Right cardiac atrium (tissue), 5 donors: ENCODE measurements at regions of chr2 and their contacts with region 1.

Region 1: DNA sequence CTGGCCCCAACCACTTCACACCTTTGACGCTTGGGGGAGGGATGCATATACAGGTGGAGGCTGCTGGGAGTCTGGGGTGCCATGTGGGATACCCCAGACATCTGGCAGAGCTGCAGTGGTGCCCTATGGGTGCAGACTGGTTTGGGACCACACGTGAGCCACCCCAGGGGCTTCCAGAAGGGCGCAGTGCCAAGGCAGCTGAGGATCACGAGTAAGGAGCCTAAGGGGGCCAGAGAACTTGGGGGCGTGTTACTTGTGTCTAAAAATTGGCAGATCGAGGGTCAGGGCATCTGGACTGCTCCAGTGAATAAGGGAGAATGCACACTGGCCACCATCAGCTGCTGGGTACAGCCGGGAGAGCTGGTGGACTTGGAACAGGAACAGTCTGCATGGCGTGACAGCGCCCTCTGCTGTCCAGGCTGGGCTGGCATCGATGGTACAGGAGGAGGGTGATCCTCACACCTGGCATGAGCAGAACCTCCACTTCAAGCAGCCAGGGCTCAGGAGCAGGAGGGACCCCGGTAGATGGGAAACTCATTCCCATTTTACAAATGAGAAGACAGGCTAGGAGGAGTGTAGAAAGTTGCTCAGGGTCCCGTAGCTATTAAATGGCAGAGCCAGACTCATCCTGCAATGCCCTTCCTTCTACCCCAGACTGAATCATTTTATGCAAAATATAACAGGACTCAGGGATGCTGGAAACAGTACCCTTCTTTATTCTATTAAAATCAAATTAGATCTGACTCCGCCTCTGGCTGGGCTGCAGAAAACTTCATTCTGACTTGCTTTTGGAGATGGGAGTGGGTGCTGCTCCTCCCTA is 60.4 kb downstream of the ATOH8 start:
- DNase-seq: peak; percentile 89 to 97 (median 96)
- ATAC-seq: peak; percentile 91
- H3K4me3 ChIP-seq: no peak overlapping the region
- H3K27ac ChIP-seq: no peak overlapping the region
- H3K4me1 ChIP-seq: peaks cover 3% of the 10 kb centered on the region
- H3K27me3 ChIP-seq: no peaks in the 10 kb centered on the region

Region 2: DNA sequence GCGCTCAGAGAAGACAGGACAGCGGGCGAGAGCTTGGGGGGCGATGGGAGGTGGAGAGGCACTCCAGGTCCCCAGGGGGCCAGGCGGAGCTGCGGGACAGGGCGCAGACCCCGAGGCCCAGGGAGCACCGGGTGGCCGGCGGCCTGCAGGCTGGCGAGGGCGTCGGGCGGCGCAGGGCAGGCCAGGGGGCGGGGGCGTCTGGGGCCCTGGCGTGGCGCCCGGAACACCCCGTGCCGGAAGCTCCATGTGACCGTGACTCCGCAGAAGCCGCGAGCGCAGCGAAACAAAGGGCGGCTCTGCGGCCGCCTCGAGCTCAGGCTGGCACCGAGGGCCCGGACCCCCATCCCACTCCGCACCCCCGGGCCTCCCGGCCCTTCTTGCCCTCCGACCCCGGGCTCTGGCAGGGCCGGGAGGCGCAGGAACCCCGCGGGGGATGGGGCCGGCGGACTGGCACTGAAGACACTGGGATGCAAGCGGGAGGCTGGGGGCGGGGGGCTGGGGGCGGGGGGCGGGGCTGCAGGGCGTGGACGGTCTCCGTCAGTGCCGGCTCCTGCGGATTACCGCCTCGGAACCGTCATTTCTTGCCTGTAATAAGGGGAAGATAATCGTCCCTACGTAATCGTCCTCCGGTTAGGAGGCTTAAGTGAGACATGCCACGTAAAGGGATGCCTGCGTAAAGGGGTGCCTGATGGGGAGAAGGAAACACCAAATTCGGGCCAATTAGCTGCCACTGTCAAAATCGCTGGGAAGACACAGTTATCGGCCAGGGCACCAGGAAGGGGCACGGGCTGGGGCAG is 376.5 kb before region 1 on chr2:
- intact Hi-C with region 1: no loop called
- DNase-seq: peak; percentile 91 to 97 (median 96)
- ATAC-seq: peak; percentile 88 to 89
- H3K4me3 ChIP-seq: peak overlapping the region; percentile 66
- H3K27ac ChIP-seq: peak overlapping the region; percentile 99
- H3K4me1 ChIP-seq: peaks cover 15% of the 10 kb centered on the region
- H3K27me3 ChIP-seq: no peaks in the 10 kb centered on the region

Region 3: DNA sequence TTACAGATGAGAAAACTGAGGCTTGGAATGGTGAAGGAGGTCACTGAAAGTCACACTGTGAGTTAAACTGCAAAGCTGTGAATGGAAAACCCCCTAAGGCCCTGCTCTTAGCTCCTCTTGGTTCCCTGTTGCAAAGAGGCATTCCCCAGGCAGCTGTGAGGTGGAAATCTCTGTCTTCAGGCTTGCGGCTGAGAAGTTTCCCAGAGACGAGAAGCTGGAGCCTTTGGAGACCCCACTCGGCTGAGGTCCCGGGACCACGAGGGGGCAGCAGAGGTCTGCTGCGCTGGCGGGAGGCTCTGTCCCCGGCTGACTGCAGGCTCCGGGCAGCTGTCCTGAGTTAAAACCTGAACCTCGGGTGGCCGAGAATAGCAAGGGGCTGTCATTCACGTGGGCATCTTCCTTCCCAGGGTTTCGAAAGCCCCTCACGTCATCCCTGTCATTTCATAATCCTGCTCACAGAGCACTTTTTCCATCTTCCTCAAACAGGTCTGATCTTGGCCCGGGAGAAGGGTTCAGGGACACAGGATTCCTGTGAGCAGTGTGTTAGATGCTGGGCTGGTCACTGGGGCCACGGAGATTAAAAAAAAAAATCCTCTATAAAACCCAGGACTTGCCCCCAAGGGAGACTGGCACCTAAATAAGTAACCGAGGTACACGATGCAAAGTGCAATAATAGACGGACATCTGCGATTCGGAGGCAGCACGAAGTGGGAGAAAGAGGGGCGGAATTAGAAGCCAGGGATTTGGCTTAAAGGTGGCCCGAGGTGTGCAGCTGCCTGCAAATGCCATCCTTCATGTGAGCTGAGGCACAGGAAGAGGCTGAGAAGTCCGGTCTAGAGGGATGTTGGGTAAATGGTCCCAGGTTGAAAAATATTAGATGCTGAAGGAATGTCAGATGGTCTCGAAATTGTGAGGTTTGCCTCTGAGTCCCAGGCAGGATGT is 85.0 kb before region 1 on chr2:
- intact Hi-C with region 1: loop called (anchors 2 to 5 kb)
- DNase-seq: peak; percentile 91 to 96 (median 96)
- ATAC-seq: peak; percentile 94 to 96
- H3K4me3 ChIP-seq: no peak overlapping the region
- H3K27ac ChIP-seq: no peak overlapping the region
- H3K4me1 ChIP-seq: no peaks in the 10 kb centered on the region
- H3K27me3 ChIP-seq: no peaks in the 10 kb centered on the region